HAP-1 (cell line): ENCODE measurements at regions of chr12 and their contacts with region 1.

Region 1: GRCh38 chr12:43882578-43883178 is 46.8 kb downstream of the TMEM117 start:
- DNase-seq: peak; percentile 43 to 57
- H3K4me3 ChIP-seq: no peak overlapping the region
- H3K4me1 ChIP-seq: no peaks in the 10 kb centered on the region
- H3K27me3 ChIP-seq: no peaks in the 10 kb centered on the region

Region 2: GRCh38 chr12:42705863-42706262 is 1176.8 kb before region 1 on chr12:
- in situ Hi-C with region 1: no loop called
- DNase-seq: peak in 1 of 2 experiments; percentile 10
- H3K4me3 ChIP-seq: no peak overlapping the region
- H3K4me1 ChIP-seq: no peaks in the 10 kb centered on the region
- H3K27me3 ChIP-seq: no peaks in the 10 kb centered on the region

Region 3: DNA sequence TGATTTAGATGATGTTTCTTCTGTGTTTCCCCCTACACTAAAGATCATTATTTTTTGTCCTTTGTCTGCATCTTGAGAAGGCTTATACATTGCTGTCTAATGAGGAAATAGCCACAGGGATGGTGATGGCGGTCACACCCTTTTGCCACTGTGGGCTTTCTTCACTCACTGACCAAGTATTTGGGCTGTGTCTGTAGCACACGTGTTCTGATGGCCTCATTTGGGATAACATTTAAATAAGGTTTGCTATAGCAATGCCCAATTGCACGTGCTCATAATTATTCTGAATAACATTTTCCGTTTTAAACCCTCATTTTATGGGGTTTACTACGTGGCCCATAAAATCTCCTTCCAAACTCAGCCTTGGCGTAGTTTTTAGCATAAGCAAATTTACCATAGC is 1062.8 kb before region 1 on chr12:
- in situ Hi-C with region 1: no loop called
- DNase-seq: peak; percentile 20 to 28
- H3K4me3 ChIP-seq: no peak overlapping the region
- H3K4me1 ChIP-seq: no peaks in the 10 kb centered on the region; the same call in 1 of the 2 replicates
- H3K27me3 ChIP-seq: no peaks in the 10 kb centered on the region

Region 4: DNA sequence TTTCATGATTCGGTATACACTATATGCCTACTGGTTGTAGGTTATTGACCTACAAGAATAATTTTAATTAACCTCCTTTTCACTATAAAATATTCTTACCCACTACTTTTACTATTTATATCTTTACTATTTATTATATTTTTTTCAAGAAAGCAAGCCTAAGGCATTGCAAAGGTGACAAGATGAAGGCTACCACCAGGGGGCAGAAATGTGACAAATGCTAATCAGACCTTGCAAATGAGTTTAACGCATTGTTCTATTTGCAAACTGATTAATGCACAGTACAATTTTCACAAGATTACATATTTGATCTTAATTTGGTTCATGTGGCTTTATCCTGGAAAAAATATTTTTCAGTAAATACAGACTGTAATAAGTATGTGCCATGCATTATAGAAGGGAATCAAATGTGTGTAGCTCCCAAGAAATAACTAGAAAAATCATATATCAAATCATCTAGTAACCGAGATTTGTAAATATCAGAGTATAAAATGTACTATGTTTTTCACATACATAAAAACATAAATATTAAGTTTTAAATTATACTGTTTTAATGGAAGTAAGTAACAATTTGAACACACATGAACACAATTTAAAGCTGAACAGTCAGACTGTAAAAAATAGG is 437.6 kb before region 1 on chr12:
- in situ Hi-C with region 1: loop called (anchors 10 kb)
- DNase-seq: peak; percentile 50 to 80
- H3K4me3 ChIP-seq: no peak overlapping the region
- H3K4me1 ChIP-seq: no peaks in the 10 kb centered on the region
- H3K27me3 ChIP-seq: peaks cover 8% of the 10 kb centered on the region; the same call in 1 of the 2 replicates

Region 5: GRCh38 chr12:43501703-43502102 is 381.0 kb before region 1 on chr12:
- in situ Hi-C with region 1: loop called (anchors 25 kb)
- DNase-seq: peak in 1 of 2 experiments; percentile 25
- H3K4me3 ChIP-seq: no peak overlapping the region
- H3K4me1 ChIP-seq: no peaks in the 10 kb centered on the region
- H3K27me3 ChIP-seq: no peaks in the 10 kb centered on the region; the same call in 1 of the 2 replicates

Region 6: GRCh38 chr12:43776498-43776897 is 106.2 kb before region 1 on chr12:
- in situ Hi-C with region 1: loop called (anchors 5 kb)
- DNase-seq: peak; percentile 15 to 24
- H3K4me3 ChIP-seq: no peak overlapping the region
- H3K4me1 ChIP-seq: no peaks in the 10 kb centered on the region
- H3K27me3 ChIP-seq: no peaks in the 10 kb centered on the region

Region 7: GRCh38 chr12:44101475-44101874 is 218.8 kb after region 1 on chr12:
- in situ Hi-C with region 1: no loop called
- DNase-seq: no peak
- H3K4me3 ChIP-seq: no peak overlapping the region
- H3K4me1 ChIP-seq: no peaks in the 10 kb centered on the region
- H3K27me3 ChIP-seq: no peaks in the 10 kb centered on the region